IMR-90 (cell line): ENCODE measurements at regions of chr7 and their contacts with region 1.

Region 1: GRCh38 chr7:77580762-77581350 is 43.8 kb downstream of the PTPN12 start:
- DNase-seq: peak; percentile 66
- ATAC-seq: peak; percentile 94
- H3K4me3 ChIP-seq: no peak overlapping the region
- H3K27ac ChIP-seq: peak overlapping the region; percentile 52; the same call in 1 of the 2 replicates
- H3K4me1 ChIP-seq: peaks cover 4% of the 10 kb centered on the region; the same call in 1 of the 2 replicates
- H3K27me3 ChIP-seq: no peaks in the 10 kb centered on the region
- CTCF ChIP-seq: no peak
- POLR2A ChIP-seq: no peak
- RAD21 ChIP-seq: no peak

Region 2: DNA sequence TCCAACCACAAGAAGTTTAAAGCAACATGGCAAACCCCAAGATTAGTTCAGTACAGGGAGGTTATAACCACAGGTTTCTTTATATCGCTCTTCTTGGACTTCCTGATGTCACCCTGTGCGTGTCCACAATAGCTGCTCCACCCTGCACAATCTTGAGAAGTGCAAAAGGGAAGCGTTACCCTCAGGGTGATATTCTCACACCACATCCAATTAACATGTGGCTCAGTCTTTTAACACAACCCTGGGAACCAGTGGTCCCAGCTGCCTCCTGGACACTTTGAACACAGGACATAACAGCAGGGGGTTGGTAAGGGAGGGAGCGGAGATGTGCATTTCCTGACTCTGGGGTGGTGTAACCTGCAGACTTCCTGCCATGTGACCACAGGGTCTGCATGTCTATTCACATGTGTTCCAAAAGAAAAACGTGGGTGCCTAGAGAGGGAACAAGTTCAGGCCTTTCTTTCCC is 229.3 kb before region 1 on chr7:
- CTCF ChIA-PET with region 1: no interaction called
- POLR2A ChIA-PET with region 1: no interaction called
- dilution Hi-C with region 1: no loop called
- in situ Hi-C with region 1: no loop called
- intact Hi-C with region 1: loop called (anchors 5 kb)
- DNase-seq: no peak
- ATAC-seq: no peak
- H3K4me3 ChIP-seq: no peak overlapping the region
- H3K27ac ChIP-seq: no peak overlapping the region
- H3K4me1 ChIP-seq: peaks cover 12% of the 10 kb centered on the region
- H3K27me3 ChIP-seq: no peaks in the 10 kb centered on the region
- CTCF ChIP-seq: no peak
- POLR2A ChIP-seq: no peak
- RAD21 ChIP-seq: no peak

Region 3: GRCh38 chr7:77425101-77426051 is 155.5 kb before region 1 on chr7:
- CTCF ChIA-PET with region 1: no interaction called
- POLR2A ChIA-PET with region 1: no interaction called
- dilution Hi-C with region 1: no loop called
- in situ Hi-C with region 1: no loop called
- intact Hi-C with region 1: loop called (anchors 5 kb)
- DNase-seq: peak; percentile 91
- ATAC-seq: peak; percentile 82
- H3K4me3 ChIP-seq: peak overlapping the region; percentile 38
- H3K27ac ChIP-seq: peak overlapping the region; percentile 38
- H3K4me1 ChIP-seq: peaks cover 16% of the 10 kb centered on the region
- H3K27me3 ChIP-seq: no peaks in the 10 kb centered on the region
- CTCF ChIP-seq: 0 out of 2 replicates have a peak, but pooled peaks have one; percentile 4
- POLR2A ChIP-seq: no peak
- RAD21 ChIP-seq: no peak

Region 4: DNA sequence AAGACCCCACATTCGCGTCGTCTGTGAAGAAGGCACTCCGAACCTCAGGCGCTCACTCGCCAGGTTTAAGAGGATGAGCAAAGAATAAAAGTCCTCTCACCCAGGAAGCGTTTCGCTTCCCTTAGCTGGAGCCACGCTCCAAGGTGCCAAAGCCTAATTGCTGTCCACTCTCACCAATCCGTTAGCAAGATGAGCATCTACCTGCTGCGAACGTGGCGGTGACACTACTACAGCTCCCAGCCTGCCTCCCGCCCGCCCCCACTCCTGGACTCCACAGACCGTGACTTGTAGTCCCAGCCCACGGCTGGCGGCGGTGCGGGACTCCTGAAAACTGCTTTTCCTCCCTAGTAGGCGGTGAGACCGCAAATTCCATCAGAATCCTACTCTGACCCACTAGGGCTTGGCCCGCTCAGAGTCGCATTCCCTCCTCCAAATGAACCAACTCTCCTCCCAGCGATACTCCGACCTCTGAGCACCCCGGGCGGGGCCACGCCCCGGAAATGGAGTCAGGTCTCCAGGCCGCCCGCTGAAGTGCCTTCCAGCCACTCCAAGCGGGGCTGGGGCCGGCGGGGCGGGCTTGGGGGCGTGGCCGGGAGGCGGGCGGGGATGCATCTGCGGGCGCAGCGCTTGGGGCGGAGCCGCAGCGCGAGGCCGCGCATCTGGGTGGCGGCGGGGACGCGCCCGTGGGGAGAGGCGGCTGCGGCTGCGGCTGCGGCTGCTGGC is 44.3 kb before region 1 on chr7:
- CTCF ChIA-PET with region 1: no interaction called
- POLR2A ChIA-PET with region 1: no interaction called
- dilution Hi-C with region 1: no loop called
- in situ Hi-C with region 1: no loop called
- intact Hi-C with region 1: no loop called
- DNase-seq: peak; percentile 93
- ATAC-seq: peak; percentile 90
- H3K4me3 ChIP-seq: peak overlapping the region; percentile 67
- H3K27ac ChIP-seq: peak overlapping the region; percentile 79
- H3K4me1 ChIP-seq: peaks cover 5% of the 10 kb centered on the region
- H3K27me3 ChIP-seq: no peaks in the 10 kb centered on the region
- CTCF ChIP-seq: no peak
- POLR2A ChIP-seq: peak; percentile 80
- RAD21 ChIP-seq: no peak

Region 5: DNA sequence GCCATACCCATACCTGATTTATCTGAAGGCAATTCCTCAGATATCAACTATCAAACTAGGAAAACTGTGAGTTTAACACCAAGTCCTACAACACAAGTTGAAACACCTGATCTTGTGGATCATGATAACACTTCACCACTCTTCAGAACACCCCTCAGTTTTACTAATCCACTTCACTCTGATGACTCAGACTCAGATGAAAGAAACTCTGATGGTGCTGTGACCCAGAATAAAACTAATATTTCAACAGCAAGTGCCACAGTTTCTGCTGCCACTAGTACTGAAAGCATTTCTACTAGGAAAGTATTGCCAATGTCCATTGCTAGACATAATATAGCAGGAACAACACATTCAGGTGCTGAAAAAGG is 46.4 kb after region 1 on chr7:
- CTCF ChIA-PET with region 1: no interaction called
- POLR2A ChIA-PET with region 1: no interaction called
- dilution Hi-C with region 1: no loop called
- in situ Hi-C with region 1: no loop called
- intact Hi-C with region 1: no loop called
- DNase-seq: peak; percentile 31
- ATAC-seq: no peak
- H3K4me3 ChIP-seq: no peak overlapping the region
- H3K27ac ChIP-seq: no peak overlapping the region
- H3K4me1 ChIP-seq: peaks cover 3% of the 10 kb centered on the region; the same call in 1 of the 2 replicates
- H3K27me3 ChIP-seq: no peaks in the 10 kb centered on the region
- CTCF ChIP-seq: no peak
- POLR2A ChIP-seq: no peak
- RAD21 ChIP-seq: no peak